ENCODE measurements at regions of chr5 and their contacts with region 1.

Region 1: GRCh38 chr5:154445422-154446182 is at the start of gene SAP30L:
- DNase-seq: peak; percentile 93 to 95 (median 93)
- H3K4me3 ChIP-seq: peak within 1 kb of the TSS; percentile 91 to 94 (median 91)
- H3K4me3 Mint-ChIP-seq: peak within 1 kb of the TSS; percentile 98
- H3K27ac ChIP-seq: peak within 1 kb of the TSS; percentile 73 to 84
- H3K27ac Mint-ChIP-seq: peak within 1 kb of the TSS; percentile 87 to 96 (median 93)
- H3K4me1 ChIP-seq: peaks cover 34 to 43% of the 10 kb centered on the region in 2 donors
- H3K4me1 Mint-ChIP-seq: peaks cover 38% of the 10 kb centered on the region
- H3K27me3 ChIP-seq: no peaks in the 10 kb centered on the region
- H3K27me3 Mint-ChIP-seq: peaks cover 0 to 5% (median 0%) of the 10 kb centered on the region in 3 donors
- CTCF ChIP-seq: no peak
- polyA plus RNA-seq, gene SAP30L: 21.1 to 36.1 (median 29.4) TPM

Region 2: GRCh38 chr5:154042766-154043165 is 402.8 kb before region 1 on chr5:
- intact Hi-C with region 1: loop called in 1 of 2 experiments (anchors 5 kb)
- DNase-seq: peak; percentile 12 to 60 (median 39)
- H3K4me3 ChIP-seq: no peak overlapping the region
- H3K4me3 Mint-ChIP-seq: peak overlapping the region in 1 of 2 donors; percentile 57
- H3K27ac ChIP-seq: peak overlapping the region in 1 of 2 donors; percentile 0
- H3K27ac Mint-ChIP-seq: peak overlapping the region in 2 of 7 donors; percentile 19 to 74
- H3K4me1 ChIP-seq: peaks cover 23 to 36% of the 10 kb centered on the region in 2 donors
- H3K4me1 Mint-ChIP-seq: peaks cover 41% of the 10 kb centered on the region
- H3K27me3 ChIP-seq: no peaks in the 10 kb centered on the region
- H3K27me3 Mint-ChIP-seq: no peaks in the 10 kb centered on the region
- CTCF ChIP-seq: no peak

Region 3: DNA sequence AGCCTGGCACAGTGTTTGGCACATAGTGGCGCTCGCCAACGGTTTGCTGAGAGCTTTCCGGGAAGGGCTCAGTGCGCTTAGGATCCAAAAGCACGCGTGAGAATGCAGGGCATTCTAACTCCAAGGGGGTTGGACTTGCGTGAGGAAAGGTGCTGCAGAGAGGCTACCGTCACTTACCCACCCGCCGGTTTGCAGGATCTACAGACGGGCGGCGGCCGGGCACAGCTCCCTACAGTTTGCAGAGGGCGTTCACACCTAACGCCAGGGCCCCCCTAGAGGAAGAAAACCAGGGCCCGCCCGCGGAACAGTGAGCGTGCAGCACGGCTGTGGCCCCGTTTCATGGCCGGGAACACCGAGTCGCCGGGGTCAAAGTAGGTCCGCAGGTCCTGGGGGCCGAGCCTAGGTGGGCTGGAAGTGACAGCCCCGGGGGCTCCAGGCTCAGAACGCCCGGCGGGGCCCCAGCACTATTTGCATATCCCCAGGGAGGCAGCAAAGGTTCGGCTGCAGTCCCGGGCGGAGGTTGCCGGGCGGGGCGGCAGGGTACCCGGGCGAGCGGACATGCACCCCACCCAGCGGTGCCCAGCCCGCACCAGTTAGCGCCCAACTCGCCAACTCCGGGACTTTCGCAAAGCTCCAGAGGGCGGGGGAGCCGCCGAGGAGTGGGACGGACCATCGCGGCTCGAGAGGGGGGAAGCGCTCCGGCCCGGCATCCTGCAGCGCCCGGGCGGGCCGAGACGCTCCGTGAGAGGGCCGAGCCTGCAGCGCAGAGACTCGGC is 255.6 kb before region 1 on chr5:
- intact Hi-C with region 1: loop called in 1 of 2 experiments (anchors 10 kb)
- DNase-seq: peak; percentile 72 to 83 (median 80)
- H3K4me3 ChIP-seq: peak overlapping the region; percentile 57 to 91 (median 79)
- H3K4me3 Mint-ChIP-seq: peak overlapping the region; percentile 85 to 94
- H3K27ac ChIP-seq: peak overlapping the region; percentile 43 to 72
- H3K27ac Mint-ChIP-seq: peak overlapping the region in 6 of 7 donors; percentile 11 to 60 (median 46)
- H3K4me1 ChIP-seq: peaks cover 22 to 28% of the 10 kb centered on the region in 2 donors
- H3K4me1 Mint-ChIP-seq: peaks cover 33% of the 10 kb centered on the region
- H3K27me3 ChIP-seq: peaks cover 3 to 12% of the 10 kb centered on the region in 2 donors
- H3K27me3 Mint-ChIP-seq: peaks cover 14 to 28% (median 19%) of the 10 kb centered on the region in 3 donors
- CTCF ChIP-seq: peak; percentile 50

Region 4: GRCh38 chr5:154627698-154628678 is 182.4 kb after region 1 on chr5:
- intact Hi-C with region 1: no loop called
- DNase-seq: no peak
- H3K4me3 ChIP-seq: no peak overlapping the region
- H3K4me3 Mint-ChIP-seq: no peak overlapping the region
- H3K27ac ChIP-seq: no peak overlapping the region
- H3K27ac Mint-ChIP-seq: no peak overlapping the region
- H3K4me1 ChIP-seq: no peaks in the 10 kb centered on the region
- H3K4me1 Mint-ChIP-seq: no peaks in the 10 kb centered on the region
- H3K27me3 ChIP-seq: no peaks in the 10 kb centered on the region
- H3K27me3 Mint-ChIP-seq: peaks cover 2 to 6% (median 2%) of the 10 kb centered on the region in 3 donors
- CTCF ChIP-seq: no peak

Measured in CD14-positive monocyte (primary cell).